ENCODE measurements at regions of chr1 and their contacts with region 1.

Region 1: DNA sequence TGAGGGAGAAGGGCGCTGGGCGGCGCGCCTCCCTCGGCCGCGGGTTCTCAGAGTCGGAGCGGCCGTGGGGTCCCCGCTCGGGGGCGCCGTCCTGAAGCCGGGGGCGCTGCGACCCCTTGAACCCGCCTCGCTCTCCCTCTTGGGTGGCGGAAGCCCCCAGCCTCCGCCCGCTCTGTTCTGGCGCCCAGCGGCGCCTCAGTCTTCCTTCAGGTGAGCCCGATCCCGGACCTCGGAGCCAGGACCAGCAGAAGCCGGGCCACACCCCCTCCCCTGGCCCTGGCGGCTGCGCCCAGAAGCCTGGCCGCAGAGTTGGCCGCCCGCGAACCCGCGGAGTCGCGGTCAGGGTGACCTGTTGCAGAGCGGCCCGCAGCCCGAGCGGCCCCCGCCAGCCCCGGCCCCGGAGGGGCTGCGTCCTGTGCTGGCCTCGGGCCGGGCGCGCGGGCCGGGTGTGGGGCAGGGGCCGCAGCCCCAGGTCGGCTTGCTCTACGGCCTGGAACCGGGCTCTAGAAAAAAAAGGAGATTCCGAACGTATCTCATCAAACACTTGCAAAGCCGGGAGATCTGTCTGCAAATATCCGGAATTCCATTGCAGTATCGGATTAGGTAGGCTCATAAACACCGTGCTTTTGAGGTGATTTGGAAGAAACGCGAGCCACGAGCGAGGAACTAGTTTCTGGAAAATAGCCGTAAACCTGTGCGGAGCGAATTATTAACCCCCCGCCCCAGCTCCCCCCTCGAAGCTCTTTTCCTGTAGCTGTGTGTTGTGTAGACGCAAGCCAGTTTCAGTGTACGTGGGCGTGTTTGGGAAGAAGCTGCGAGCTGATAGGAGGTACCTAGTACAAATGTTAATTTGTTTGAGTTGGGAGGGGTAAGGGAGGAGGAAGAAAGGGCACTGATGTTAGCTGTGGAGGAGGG is 816 bp downstream of the RALGPS2 start:
- DNase-seq: peak; percentile 25 to 83 (median 73)
- ATAC-seq: peak; percentile 85
- H3K4me3 ChIP-seq: peak overlapping the region; percentile 93
- H3K4me3 Mint-ChIP-seq: peak overlapping the region; percentile 79 to 96 (median 88)
- H3K27ac ChIP-seq: peak overlapping the region; percentile 86
- H3K27ac Mint-ChIP-seq: peak overlapping the region; percentile 14 to 95 (median 88)
- H3K4me1 ChIP-seq: peaks cover 0 to 5% of the 10 kb centered on the region in 2 donors
- H3K4me1 Mint-ChIP-seq: peaks cover 11 to 39% (median 27%) of the 10 kb centered on the region in 7 donors
- H3K27me3 ChIP-seq: no peaks in the 10 kb centered on the region
- H3K27me3 Mint-ChIP-seq: peaks cover 0 to 29% (median 0%) of the 10 kb centered on the region in 5 donors

Region 2: DNA sequence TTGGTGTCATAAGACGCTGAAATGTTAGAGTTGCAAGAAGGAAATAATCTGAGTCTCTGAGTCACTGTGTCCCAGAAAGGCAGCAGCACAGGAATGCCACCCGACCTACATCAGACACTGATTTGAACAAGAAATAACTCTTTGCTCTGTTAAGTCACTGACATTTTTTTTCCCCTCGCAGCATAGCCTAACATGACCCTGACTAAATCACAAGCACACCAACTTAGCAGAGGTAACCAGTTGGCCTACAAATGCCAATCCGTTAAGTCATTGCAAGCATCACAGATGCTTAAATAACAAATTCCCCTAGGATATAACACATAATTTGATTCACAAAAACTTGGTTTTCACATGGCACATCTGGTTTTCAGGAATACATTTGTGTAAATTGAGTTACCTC is 1105.2 kb before region 1 on chr1:
- CTCF ChIA-PET with region 1: no interaction called
- POLR2A ChIA-PET with region 1: no interaction called
- intact Hi-C with region 1: no loop called
- DNase-seq: no peak
- ATAC-seq: no peak
- H3K4me3 ChIP-seq: no peak overlapping the region
- H3K4me3 Mint-ChIP-seq: no peak overlapping the region
- H3K27ac ChIP-seq: no peak overlapping the region
- H3K27ac Mint-ChIP-seq: no peak overlapping the region
- H3K4me1 ChIP-seq: no peaks in the 10 kb centered on the region
- H3K4me1 Mint-ChIP-seq: no peaks in the 10 kb centered on the region
- H3K27me3 ChIP-seq: no peaks in the 10 kb centered on the region
- H3K27me3 Mint-ChIP-seq: no peaks in the 10 kb centered on the region

Region 3: GRCh38 chr1:177864538-177865305 is 861.1 kb before region 1 on chr1:
- CTCF ChIA-PET with region 1: no interaction called
- POLR2A ChIA-PET with region 1: no interaction called
- intact Hi-C with region 1: no loop called
- DNase-seq: no peak
- ATAC-seq: no peak
- H3K4me3 ChIP-seq: no peak overlapping the region
- H3K4me3 Mint-ChIP-seq: no peak overlapping the region
- H3K27ac ChIP-seq: no peak overlapping the region
- H3K27ac Mint-ChIP-seq: no peak overlapping the region
- H3K4me1 ChIP-seq: no peaks in the 10 kb centered on the region
- H3K4me1 Mint-ChIP-seq: no peaks in the 10 kb centered on the region
- H3K27me3 ChIP-seq: no peaks in the 10 kb centered on the region
- H3K27me3 Mint-ChIP-seq: peaks cover 0 to 2% (median 0%) of the 10 kb centered on the region in 5 donors

Region 4: GRCh38 chr1:178542560-178543356 is 183.1 kb before region 1 on chr1:
- CTCF ChIA-PET with region 1: no interaction called
- POLR2A ChIA-PET with region 1: no interaction called
- intact Hi-C with region 1: loop called (anchors 1 to 2 kb)
- DNase-seq: peak; percentile 61 to 98 (median 87)
- ATAC-seq: peak; percentile 96
- H3K4me3 ChIP-seq: peak overlapping the region; percentile 99
- H3K4me3 Mint-ChIP-seq: peak overlapping the region; percentile 89 to 96 (median 92)
- H3K27ac ChIP-seq: peak overlapping the region; percentile 56
- H3K27ac Mint-ChIP-seq: peak overlapping the region; percentile 32 to 88 (median 83)
- H3K4me1 ChIP-seq: peaks cover 0 to 5% of the 10 kb centered on the region in 2 donors
- H3K4me1 Mint-ChIP-seq: peaks cover 0 to 15% (median 10%) of the 10 kb centered on the region in 7 donors
- H3K27me3 ChIP-seq: no peaks in the 10 kb centered on the region
- H3K27me3 Mint-ChIP-seq: no peaks in the 10 kb centered on the region

Region 5: GRCh38 chr1:179025125-179025974 is 299.5 kb after region 1 on chr1 and contains the start of gene FAM20B:
- CTCF ChIA-PET with region 1: no interaction called
- POLR2A ChIA-PET with region 1: interaction called, 3 read pairs
- intact Hi-C with region 1: loop called (anchors 1 to 2 kb)
- DNase-seq: peak; percentile 80 to 89 (median 86)
- ATAC-seq: peak; percentile 95
- H3K4me3 ChIP-seq: peak within 1 kb of the TSS; percentile 71
- H3K4me3 Mint-ChIP-seq: peak within 1 kb of the TSS; percentile 87 to 98 (median 91)
- H3K27ac ChIP-seq: peak within 1 kb of the TSS; percentile 84
- H3K27ac Mint-ChIP-seq: peak within 1 kb of the TSS; percentile 86 to 92 (median 89)
- H3K4me1 ChIP-seq: peaks cover 10 to 17% of the 10 kb centered on the region in 2 donors
- H3K4me1 Mint-ChIP-seq: peaks cover 35 to 60% (median 50%) of the 10 kb centered on the region in 7 donors
- H3K27me3 ChIP-seq: no peaks in the 10 kb centered on the region
- H3K27me3 Mint-ChIP-seq: peaks cover 0 to 31% (median 0%) of the 10 kb centered on the region in 5 donors
- total RNA-seq, gene FAM20B: 14.3 to 27.9 (median 25.2) TPM

Region 6: DNA sequence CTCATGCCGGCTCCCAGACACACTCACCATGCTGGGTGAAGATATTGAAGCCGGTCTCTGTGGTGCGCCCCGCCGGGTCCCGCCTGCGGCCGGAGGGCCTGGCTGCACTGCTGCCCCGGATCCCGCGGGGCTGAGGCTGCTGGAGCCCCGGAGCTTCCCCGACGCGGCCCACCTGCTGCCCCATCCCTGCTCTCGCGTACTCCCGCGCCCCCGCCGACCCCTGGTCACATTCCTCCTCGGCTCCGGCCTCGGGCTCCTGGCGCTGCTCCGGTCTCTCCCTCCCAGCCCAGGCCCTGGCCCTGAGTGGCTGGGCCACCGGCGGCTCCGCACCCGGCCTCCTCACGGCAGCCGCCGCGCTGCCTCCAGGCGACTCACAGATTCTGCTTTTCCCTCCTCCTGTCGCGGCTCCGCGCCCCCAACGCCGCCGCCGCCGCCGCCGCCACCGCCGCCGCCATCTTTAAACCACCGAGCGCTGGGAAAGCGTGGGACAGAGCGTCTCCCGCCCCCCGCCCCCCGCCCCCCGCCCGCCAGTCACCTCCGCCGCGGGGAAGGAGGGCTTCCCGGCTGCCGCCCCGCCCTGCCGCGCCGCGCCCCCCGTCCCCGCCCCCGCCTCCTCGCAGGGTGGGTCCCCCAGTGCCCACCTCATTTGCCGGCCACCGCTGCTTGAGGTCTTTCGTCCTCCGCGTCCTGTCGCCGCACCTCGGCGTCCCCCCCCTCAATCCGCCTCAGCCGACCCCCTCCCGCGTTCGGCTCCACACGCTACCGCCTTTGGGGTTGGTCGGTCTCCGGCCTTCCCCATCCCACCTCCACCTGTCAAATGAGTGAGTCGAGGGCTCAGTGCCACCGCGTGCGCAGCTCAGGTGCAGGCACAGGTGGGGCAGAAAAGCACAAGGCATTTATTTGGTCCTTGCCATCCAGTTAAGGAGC is 503.6 kb after region 1 on chr1 and contains the start of gene ABL2:
- CTCF ChIA-PET with region 1: no interaction called
- POLR2A ChIA-PET with region 1: no interaction called
- intact Hi-C with region 1: loop called (anchors 5 kb)
- DNase-seq: peak; percentile 20 to 73 (median 41)
- ATAC-seq: peak; percentile 77
- H3K4me3 ChIP-seq: peak within 1 kb of the TSS; percentile 66
- H3K4me3 Mint-ChIP-seq: peak within 1 kb of the TSS; percentile 85 to 97 (median 92)
- H3K27ac ChIP-seq: peak within 1 kb of the TSS; percentile 81
- H3K27ac Mint-ChIP-seq: peak within 1 kb of the TSS; percentile 81 to 95 (median 89)
- H3K4me1 ChIP-seq: peaks cover 0 to 14% of the 10 kb centered on the region in 2 donors
- H3K4me1 Mint-ChIP-seq: peaks cover 20 to 43% (median 39%) of the 10 kb centered on the region in 7 donors
- H3K27me3 ChIP-seq: no peaks in the 10 kb centered on the region
- H3K27me3 Mint-ChIP-seq: peaks cover 0 to 5% (median 0%) of the 10 kb centered on the region in 5 donors
- total RNA-seq, gene ABL2: 10.3 to 20.1 (median 18.6) TPM

Region 7: DNA sequence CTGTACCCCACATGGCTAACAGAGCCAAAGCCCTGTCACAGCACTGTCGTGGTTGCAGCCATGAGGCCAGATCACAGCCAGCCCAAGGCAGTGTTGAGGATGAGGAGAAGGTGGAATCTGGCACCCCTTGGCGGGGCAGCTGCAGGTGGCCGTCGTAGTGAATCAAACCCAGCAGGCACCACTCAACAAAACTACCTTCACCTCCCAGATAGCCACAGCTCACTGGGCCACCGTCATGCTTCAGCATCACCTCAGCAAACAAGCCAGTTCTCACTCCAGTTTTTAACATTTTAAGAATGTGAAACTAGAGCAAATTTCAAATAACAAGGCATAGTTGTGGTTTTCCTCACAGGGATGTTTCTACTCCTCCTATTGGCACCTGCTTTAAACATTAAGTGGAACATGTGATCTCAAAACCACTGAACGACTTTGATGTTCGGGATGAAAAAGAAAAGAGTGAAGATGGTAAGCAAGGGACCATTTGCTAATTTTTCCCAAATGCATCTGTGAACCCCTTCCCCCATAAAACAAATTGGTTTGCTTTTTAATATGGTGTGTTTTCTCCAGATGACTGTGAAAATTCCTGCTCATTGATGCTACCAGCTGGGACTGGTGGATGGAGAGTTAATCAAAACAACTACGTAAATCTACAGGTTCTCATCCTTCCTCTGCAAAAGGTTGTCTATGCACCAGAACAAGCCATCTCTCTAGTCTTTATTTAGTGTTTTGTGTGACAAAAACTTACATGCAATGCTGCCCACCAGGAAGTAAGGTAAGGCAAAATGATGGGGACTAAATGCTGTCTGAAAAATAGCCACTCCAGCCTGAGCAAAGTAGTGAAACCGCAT is 1106.2 kb after region 1 on chr1:
- CTCF ChIA-PET with region 1: no interaction called
- POLR2A ChIA-PET with region 1: no interaction called
- intact Hi-C with region 1: loop called in 1 of 2 experiments (anchors 5 kb)
- DNase-seq: peak in 7 of 9 donors; percentile 63 to 80 (median 76)
- ATAC-seq: peak; percentile 84
- H3K4me3 ChIP-seq: peak overlapping the region; percentile 56
- H3K4me3 Mint-ChIP-seq: peak overlapping the region; percentile 63 to 81 (median 72)
- H3K27ac ChIP-seq: peak overlapping the region; percentile 59
- H3K27ac Mint-ChIP-seq: peak overlapping the region; percentile 52 to 95 (median 91)
- H3K4me1 ChIP-seq: peaks cover 16 to 37% of the 10 kb centered on the region in 2 donors
- H3K4me1 Mint-ChIP-seq: peaks cover 23 to 47% (median 38%) of the 10 kb centered on the region in 7 donors
- H3K27me3 ChIP-seq: no peaks in the 10 kb centered on the region
- H3K27me3 Mint-ChIP-seq: no peaks in the 10 kb centered on the region

Region 8: DNA sequence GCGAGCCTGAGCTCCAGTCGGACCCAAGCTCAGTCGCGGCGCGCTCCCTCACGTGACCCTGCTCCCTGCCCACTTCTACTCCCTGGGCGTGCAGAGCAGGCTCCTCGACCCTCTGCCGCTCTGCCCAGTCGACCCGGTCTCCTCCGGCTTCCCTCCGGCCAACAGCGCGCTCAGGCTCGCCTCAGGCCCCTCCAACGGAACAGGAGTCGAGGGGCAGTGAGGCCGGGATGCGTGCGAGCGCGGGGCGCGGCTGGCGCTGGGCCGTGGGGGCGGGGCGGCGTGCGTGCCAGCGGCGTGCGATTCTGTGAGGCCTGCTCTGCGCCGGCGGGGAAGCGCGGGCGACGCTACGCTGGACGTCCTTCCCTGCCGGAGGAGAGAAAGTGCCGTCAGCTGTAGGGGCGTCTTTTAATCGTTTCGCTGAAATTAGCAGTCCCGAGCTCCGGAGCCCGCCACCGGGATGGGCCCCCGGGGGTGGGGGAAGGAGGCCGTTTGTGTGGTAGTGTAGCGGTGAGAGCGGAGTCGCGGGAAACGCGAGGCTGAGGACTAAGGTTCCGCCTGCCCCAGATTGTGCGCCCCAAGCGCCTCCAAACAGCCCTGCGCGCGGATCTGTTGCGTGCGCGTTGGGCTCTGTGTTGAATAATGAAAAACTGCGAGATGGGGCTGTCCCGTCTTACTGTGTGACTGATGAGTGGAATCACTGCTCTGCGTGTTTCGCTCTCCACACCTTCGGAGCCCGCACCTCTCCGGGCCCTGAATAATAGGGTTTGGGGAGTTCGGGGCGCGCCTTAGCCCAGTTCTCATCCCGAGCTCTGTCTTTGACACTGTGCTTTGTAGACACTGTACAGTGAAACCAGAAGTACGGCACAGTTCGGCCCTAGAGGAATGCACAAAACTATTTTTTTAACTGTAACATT is 1776.8 kb after region 1 on chr1 and contains the start of gene ACBD6:
- CTCF ChIA-PET with region 1: no interaction called
- POLR2A ChIA-PET with region 1: no interaction called
- intact Hi-C with region 1: loop called in 1 of 2 experiments (anchors 2 kb)
- DNase-seq: peak; percentile 80 to 92 (median 89)
- ATAC-seq: peak; percentile 95
- H3K4me3 ChIP-seq: peak within 1 kb of the TSS; percentile 85
- H3K4me3 Mint-ChIP-seq: peak within 1 kb of the TSS; percentile 89 to 100 (median 97)
- H3K27ac ChIP-seq: peak within 1 kb of the TSS; percentile 79
- H3K27ac Mint-ChIP-seq: peak within 1 kb of the TSS; percentile 91 to 99 (median 98)
- H3K4me1 ChIP-seq: peaks cover 10 to 18% of the 10 kb centered on the region in 2 donors
- H3K4me1 Mint-ChIP-seq: peaks cover 17 to 55% (median 38%) of the 10 kb centered on the region in 7 donors
- H3K27me3 ChIP-seq: no peaks in the 10 kb centered on the region
- H3K27me3 Mint-ChIP-seq: peaks cover 0 to 5% (median 0%) of the 10 kb centered on the region in 5 donors
- total RNA-seq, gene ACBD6: 44.2 to 75.7 (median 47.3) TPM